ENCODE measurements at regions of chr18 and their contacts with region 1.

Region 1: GRCh38 chr18:22563098-22563707 is 145.5 kb upstream of the CTAGE1 start:
- DNase-seq: no peak
- ATAC-seq: peak; percentile 65 to 66
- H3K4me3 ChIP-seq: no peak overlapping the region
- H3K27ac ChIP-seq: no peak overlapping the region
- H3K4me1 ChIP-seq: peaks cover 6 to 9% of the 10 kb centered on the region in 2 donors
- H3K27me3 ChIP-seq: peaks cover 7 to 33% (median 31%) of the 10 kb centered on the region in 3 donors
- CTCF ChIP-seq: peak; percentile 25 to 58 (median 54)
- POLR2A ChIP-seq: no peak

Region 2: GRCh38 chr18:21897811-21898210 is 665.4 kb before region 1 on chr18:
- in situ Hi-C with region 1: loop called in 1 of 4 experiments (anchors 10 kb)
- intact Hi-C with region 1: no loop called
- DNase-seq: no peak
- ATAC-seq: no peak
- H3K4me3 ChIP-seq: no peak overlapping the region
- H3K27ac ChIP-seq: no peak overlapping the region
- H3K4me1 ChIP-seq: no peaks in the 10 kb centered on the region
- H3K27me3 ChIP-seq: no peaks in the 10 kb centered on the region
- CTCF ChIP-seq: peak in 3 of 5 experiments; percentile 20 to 46 (median 41)
- POLR2A ChIP-seq: no peak

Region 3: DNA sequence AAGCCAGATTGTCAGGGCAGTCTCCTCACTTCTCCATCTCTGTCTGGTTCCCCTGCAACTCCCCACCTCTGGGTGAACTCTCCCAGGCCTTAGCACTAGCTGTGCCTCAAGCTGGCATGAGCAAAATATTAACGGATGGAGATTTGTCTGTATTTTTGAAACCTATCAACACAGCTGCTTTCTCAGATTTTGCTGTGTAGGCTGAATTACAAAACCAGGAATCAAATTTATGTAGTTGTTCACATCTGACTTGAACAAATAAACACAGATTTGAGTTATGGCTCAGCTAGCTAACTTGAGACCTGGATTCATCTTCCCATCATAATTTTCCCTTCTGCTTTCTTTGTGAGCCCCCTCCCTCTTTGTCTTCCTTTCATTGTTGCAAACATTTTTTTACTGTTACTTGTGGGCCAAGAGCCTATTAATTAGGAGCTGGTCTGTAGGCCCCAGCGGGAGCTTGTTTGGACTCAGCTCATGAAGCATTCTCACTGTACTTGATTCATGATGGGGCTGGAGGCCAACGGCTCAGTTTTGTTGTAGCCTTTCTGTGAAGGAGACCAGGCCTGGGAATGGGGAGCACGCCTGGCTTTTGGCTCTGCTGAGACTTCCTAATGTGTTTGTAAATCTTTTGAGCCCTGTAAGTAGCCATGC is 557.9 kb before region 1 on chr18:
- in situ Hi-C with region 1: loop called in 1 of 4 experiments (anchors 25 kb)
- intact Hi-C with region 1: no loop called
- DNase-seq: no peak
- ATAC-seq: no peak
- H3K4me3 ChIP-seq: no peak overlapping the region
- H3K27ac ChIP-seq: no peak overlapping the region
- H3K4me1 ChIP-seq: no peaks in the 10 kb centered on the region
- H3K27me3 ChIP-seq: no peaks in the 10 kb centered on the region
- CTCF ChIP-seq: no peak
- POLR2A ChIP-seq: no peak

Region 4: DNA sequence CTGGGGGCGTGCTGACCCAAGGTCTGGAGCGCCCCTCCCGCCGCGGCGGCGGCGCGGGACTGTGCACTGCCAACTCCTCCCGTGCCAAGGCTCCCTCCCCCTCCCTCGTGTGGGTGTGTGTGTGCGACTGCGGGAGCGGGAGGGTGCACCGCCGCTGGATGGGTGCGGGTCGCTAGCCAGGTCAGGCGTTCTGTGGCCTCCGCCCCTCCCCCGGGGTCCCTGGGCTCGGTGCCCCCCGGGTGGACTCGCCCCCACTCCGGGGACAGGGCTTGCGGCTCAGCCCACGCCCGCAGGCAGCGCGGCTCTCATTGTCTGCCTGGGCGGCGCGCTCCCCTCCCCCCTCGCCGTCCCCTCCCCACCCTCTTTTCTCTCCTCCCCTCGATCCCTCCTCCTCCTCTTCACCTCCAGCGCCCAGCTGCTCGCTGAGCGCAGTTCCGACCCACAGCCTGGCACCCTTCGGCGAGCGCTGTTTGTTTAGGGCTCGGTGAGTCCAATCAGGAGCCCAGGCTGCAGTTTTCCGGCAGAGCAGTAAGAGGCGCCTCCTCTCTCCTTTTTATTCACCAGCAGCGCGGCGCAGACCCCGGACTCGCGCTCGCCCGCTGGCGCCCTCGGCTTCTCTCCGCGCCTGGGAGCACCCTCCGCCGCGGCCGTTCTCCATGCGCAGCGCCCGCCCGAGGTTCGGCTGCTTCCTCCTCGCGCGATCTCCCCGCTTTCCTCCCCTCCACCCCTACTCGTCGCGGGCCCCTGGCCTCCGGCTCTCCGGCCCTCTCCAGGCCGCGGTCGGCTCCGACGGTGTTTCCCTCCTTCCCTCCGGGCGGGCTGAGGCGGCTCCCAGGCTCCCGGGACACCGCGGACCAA is 394.0 kb before region 1 on chr18 and contains the start of gene GATA6:
- in situ Hi-C with region 1: loop called in 3 of 4 experiments (anchors 25 kb)
- intact Hi-C with region 1: loop called (anchors 2 kb)
- DNase-seq: peak in 1 of 2 donors; percentile 31
- ATAC-seq: peak; percentile 48 to 50
- H3K4me3 ChIP-seq: peak within 1 kb of the TSS; percentile 66 to 91 (median 70)
- H3K27ac ChIP-seq: peak within 1 kb of the TSS; percentile 43 to 72 (median 65)
- H3K4me1 ChIP-seq: peaks cover 5 to 23% of the 10 kb centered on the region in 2 donors
- H3K27me3 ChIP-seq: peaks cover 88 to 94% (median 93%) of the 10 kb centered on the region in 3 donors
- CTCF ChIP-seq: peak in 2 of 5 experiments; percentile 8 to 27
- POLR2A ChIP-seq: peak; percentile 16 to 43
- total RNA-seq, gene GATA6: 0.34 to 1.2 (median 0.86) TPM

Region 5: DNA sequence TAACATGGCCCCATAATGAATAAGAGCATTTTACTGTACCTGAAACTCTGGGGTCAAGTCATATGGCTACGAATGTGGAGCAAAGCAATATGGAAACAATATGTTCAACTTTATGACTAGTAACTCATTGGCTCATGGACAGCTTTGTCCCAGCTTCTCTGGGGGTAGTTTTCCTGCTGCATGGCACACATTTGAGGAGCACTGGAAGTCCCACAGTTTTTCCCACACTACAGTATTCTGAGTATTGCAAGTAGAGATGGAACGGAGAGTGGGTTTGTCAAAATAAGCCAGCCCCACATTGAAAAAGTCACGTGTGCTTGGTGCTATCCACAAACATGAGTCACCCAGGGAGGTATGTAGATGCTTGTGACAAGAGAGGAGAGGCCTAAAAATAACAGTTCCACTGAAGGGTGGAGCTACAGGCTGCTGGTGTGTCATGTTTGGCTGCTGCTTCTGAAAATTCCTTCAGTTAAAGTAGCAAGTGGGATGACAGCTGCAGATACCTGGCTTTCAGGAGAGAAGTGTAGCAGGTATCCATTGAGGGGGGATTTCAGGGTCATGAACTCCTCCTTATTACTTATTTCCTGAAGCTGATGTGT is 97.2 kb before region 1 on chr18:
- in situ Hi-C with region 1: no loop called
- intact Hi-C with region 1: loop called (anchors 10 kb)
- DNase-seq: peak in 1 of 2 donors; percentile 54
- ATAC-seq: peak; percentile 88 to 99
- H3K4me3 ChIP-seq: no peak overlapping the region
- H3K27ac ChIP-seq: no peak overlapping the region
- H3K4me1 ChIP-seq: no peaks in the 10 kb centered on the region
- H3K27me3 ChIP-seq: no peaks in the 10 kb centered on the region
- CTCF ChIP-seq: no peak
- POLR2A ChIP-seq: no peak

Region 6: GRCh38 chr18:22517356-22517755 is 45.8 kb before region 1 on chr18:
- in situ Hi-C with region 1: no loop called
- intact Hi-C with region 1: no loop called
- DNase-seq: no peak
- ATAC-seq: peak in 1 of 2 donors; percentile 62
- H3K4me3 ChIP-seq: no peak overlapping the region
- H3K27ac ChIP-seq: no peak overlapping the region
- H3K4me1 ChIP-seq: no peaks in the 10 kb centered on the region
- H3K27me3 ChIP-seq: no peaks in the 10 kb centered on the region
- CTCF ChIP-seq: no peak
- POLR2A ChIP-seq: no peak

Region 7: GRCh38 chr18:22667616-22668422 is 104.6 kb after region 1 on chr18:
- in situ Hi-C with region 1: loop called in 1 of 4 experiments (anchors 25 kb)
- intact Hi-C with region 1: no loop called
- DNase-seq: no peak
- ATAC-seq: no peak
- H3K4me3 ChIP-seq: no peak overlapping the region
- H3K27ac ChIP-seq: no peak overlapping the region
- H3K4me1 ChIP-seq: no peaks in the 10 kb centered on the region
- H3K27me3 ChIP-seq: no peaks in the 10 kb centered on the region
- CTCF ChIP-seq: no peak
- POLR2A ChIP-seq: no peak

Region 8: GRCh38 chr18:23356915-23357601 is 793.9 kb after region 1 on chr18:
- in situ Hi-C with region 1: no loop called
- intact Hi-C with region 1: no loop called
- DNase-seq: no peak
- ATAC-seq: peak; percentile 27 to 42
- H3K4me3 ChIP-seq: no peak overlapping the region
- H3K27ac ChIP-seq: peak overlapping the region; percentile 42 to 66 (median 50)
- H3K4me1 ChIP-seq: peaks cover 9 to 24% of the 10 kb centered on the region in 2 donors
- H3K27me3 ChIP-seq: no peaks in the 10 kb centered on the region
- CTCF ChIP-seq: no peak
- POLR2A ChIP-seq: no peak